AG04450 (cell line): ENCODE measurements at regions of chr10 and their contacts with region 1.

Region 1: GRCh38 chr10:88810196-88810961 is 7.8 kb downstream of the LIPM start:
- DNase-seq: peak; percentile 39
- H3K4me3 ChIP-seq: no peak overlapping the region
- H3K27ac ChIP-seq: no peak overlapping the region
- H3K27me3 ChIP-seq: peaks cover 3% of the 10 kb centered on the region
- CTCF ChIP-seq: peak; percentile 90

Region 2: DNA sequence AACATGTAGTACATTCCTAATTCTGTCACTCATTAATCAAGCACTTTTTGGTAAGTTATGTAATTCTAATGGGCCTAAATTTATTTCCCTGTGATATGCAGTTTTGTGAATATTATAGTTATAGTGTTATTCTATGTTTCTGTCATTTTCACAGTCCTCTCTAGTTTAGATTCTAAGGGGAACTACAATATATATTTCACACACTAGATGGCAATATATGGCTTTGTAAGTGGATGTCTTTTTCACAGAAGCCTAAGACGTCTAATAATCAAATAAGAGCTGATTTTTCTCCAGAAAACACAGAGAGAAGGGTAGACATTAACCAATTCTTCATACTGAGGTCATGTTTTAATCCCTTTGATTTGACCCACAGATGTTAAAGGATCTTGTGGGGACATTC is 245.3 kb before region 1 on chr10:
- CTCF ChIA-PET with region 1: interaction called, 63 read pairs
- POLR2A ChIA-PET with region 1: no interaction called
- DNase-seq: no peak
- H3K4me3 ChIP-seq: no peak overlapping the region
- H3K27ac ChIP-seq: no peak overlapping the region
- H3K27me3 ChIP-seq: no peaks in the 10 kb centered on the region
- CTCF ChIP-seq: peak; percentile 46

Region 3: GRCh38 chr10:88687853-88688467 is 122.4 kb before region 1 on chr10:
- CTCF ChIA-PET with region 1: interaction called, 49 read pairs
- POLR2A ChIA-PET with region 1: no interaction called
- DNase-seq: no peak
- H3K4me3 ChIP-seq: no peak overlapping the region
- H3K27ac ChIP-seq: no peak overlapping the region
- H3K27me3 ChIP-seq: no peaks in the 10 kb centered on the region
- CTCF ChIP-seq: peak; percentile 85

Region 4: GRCh38 chr10:88693392-88694020 is 116.9 kb before region 1 on chr10:
- CTCF ChIA-PET with region 1: interaction called, 49 read pairs
- POLR2A ChIA-PET with region 1: no interaction called
- DNase-seq: no peak
- H3K4me3 ChIP-seq: no peak overlapping the region
- H3K27ac ChIP-seq: no peak overlapping the region
- H3K27me3 ChIP-seq: peaks cover 4% of the 10 kb centered on the region
- CTCF ChIP-seq: peak; percentile 25

Region 5: DNA sequence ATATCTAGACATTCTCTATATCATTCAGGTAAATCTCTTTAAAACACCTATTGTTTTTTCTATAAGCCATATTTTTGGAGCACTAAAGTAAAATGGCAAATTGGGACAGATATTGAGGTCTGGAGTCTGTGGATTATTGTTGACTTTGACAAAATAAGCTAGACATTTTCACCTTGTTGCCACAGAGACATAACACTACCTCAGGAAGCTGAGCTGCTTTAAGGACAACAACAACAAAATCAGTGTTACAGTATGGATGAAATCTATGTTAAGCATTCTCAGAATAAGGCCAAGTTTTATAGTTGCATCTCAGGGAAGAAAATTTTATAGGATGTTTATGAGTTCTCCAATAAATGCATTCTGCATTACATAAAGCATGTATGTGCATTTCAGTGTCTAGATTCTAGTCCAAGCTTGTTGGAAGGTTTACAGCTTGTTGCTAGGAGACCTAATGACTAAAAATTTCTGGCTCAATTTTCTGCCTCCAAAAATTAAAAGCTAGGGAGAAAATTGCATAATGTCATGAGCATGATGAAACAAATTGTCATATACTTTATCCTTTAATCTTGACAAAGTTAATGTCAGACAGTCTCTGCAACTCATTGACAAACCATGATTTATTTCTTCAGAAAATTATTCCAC is 10.5 kb after region 1 on chr10:
- CTCF ChIA-PET with region 1: interaction called, 40 read pairs
- POLR2A ChIA-PET with region 1: no interaction called
- DNase-seq: peak; percentile 18
- H3K4me3 ChIP-seq: no peak overlapping the region
- H3K27ac ChIP-seq: no peak overlapping the region
- H3K27me3 ChIP-seq: no peaks in the 10 kb centered on the region
- CTCF ChIP-seq: no peak

Region 6: GRCh38 chr10:88870089-88870488 is 59.7 kb after region 1 on chr10:
- CTCF ChIA-PET with region 1: no interaction called
- POLR2A ChIA-PET with region 1: no interaction called
- DNase-seq: no peak
- H3K4me3 ChIP-seq: no peak overlapping the region
- H3K27ac ChIP-seq: no peak overlapping the region
- H3K27me3 ChIP-seq: no peaks in the 10 kb centered on the region
- CTCF ChIP-seq: no peak

Region 7: GRCh38 chr10:89450901-89451300 is 640.5 kb after region 1 on chr10:
- CTCF ChIA-PET with region 1: no interaction called
- POLR2A ChIA-PET with region 1: no interaction called
- DNase-seq: no peak
- H3K4me3 ChIP-seq: no peak overlapping the region
- H3K27ac ChIP-seq: no peak overlapping the region
- H3K27me3 ChIP-seq: no peaks in the 10 kb centered on the region
- CTCF ChIP-seq: no peak

Region 8: GRCh38 chr10:89550509-89550908 is 740.1 kb after region 1 on chr10:
- CTCF ChIA-PET with region 1: no interaction called
- POLR2A ChIA-PET with region 1: no interaction called
- DNase-seq: no peak
- H3K4me3 ChIP-seq: no peak overlapping the region
- H3K27ac ChIP-seq: no peak overlapping the region
- H3K27me3 ChIP-seq: no peaks in the 10 kb centered on the region
- CTCF ChIP-seq: no peak